MCF 10A (cell line): ENCODE measurements at regions of chr1 and their contacts with region 1.

Region 1: DNA sequence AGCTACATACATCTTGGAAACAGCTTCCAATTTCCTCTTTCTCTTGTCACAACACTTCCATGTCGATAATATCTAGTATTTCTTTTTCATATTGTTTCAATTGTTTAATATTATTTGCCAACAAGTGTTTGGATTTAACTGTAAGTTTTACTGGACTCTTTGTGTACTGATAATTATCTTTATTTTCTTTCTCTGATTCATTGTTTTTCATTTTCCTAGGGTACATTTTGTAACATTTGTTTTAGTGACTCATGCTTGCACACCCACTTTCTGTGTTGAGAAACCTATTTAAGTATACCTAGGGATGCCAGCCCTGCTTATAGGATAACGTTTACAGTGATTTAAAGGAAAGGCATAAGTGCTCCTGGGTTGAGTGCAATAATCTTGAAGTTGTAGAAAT is 1386.0 kb upstream of the ADGRL4 start:
- DNase-seq: peak; percentile 88
- H3K4me3 Mint-ChIP-seq: no peak overlapping the region
- H3K27ac Mint-ChIP-seq: peak overlapping the region; percentile 94
- H3K4me1 Mint-ChIP-seq: peaks cover 11% of the 10 kb centered on the region
- H3K27me3 Mint-ChIP-seq: no peaks in the 10 kb centered on the region
- CTCF ChIP-seq: no peak

Region 2: DNA sequence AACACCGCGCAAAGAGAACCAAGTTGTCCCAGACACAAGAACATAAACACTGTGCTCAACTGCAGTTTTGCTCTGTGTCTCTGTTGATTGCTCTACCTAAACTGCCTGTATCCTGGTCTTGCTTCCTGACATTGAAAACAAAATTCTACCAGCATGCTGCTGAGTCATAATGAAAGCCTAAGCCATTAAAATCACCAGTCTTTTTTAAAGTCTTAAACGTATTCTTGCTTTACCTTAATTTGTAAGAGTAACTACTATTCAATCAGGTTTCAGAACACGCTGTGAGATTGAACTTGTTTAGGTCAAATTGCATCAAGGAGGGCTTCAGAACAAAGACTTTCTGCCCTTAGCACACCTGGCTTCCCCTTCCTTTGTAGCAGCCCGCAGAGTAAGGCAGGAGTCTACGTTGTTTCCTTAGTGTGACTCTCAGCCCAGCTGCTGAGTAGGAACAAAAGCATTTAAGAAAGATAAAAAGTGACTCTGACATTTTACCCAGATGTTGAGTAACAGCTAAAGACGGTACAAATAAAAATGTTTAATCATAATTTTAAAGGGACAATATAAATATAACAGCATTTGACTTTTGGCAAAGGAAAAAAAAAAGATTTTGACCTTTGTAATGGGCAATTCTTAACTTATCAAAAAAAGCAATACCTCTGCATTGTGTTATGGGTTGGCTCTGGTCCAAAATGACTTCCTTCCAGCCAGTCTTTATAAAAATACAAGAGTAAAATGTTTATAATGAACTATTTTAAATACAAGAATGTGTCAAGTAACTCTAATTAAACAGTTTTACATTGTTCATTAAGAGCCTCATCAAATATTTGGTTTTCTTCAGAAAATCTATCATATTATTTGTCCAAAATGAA is 1199.0 kb before region 1 on chr1:
- CTCF ChIA-PET with region 1: no interaction called
- POLR2A ChIA-PET with region 1: no interaction called
- intact Hi-C with region 1: loop called (anchors 10 kb)
- DNase-seq: peak; percentile 73
- H3K4me3 Mint-ChIP-seq: peak overlapping the region; percentile 52
- H3K27ac Mint-ChIP-seq: peak overlapping the region; percentile 92
- H3K4me1 Mint-ChIP-seq: peaks cover 10% of the 10 kb centered on the region
- H3K27me3 Mint-ChIP-seq: no peaks in the 10 kb centered on the region
- CTCF ChIP-seq: no peak

Region 3: DNA sequence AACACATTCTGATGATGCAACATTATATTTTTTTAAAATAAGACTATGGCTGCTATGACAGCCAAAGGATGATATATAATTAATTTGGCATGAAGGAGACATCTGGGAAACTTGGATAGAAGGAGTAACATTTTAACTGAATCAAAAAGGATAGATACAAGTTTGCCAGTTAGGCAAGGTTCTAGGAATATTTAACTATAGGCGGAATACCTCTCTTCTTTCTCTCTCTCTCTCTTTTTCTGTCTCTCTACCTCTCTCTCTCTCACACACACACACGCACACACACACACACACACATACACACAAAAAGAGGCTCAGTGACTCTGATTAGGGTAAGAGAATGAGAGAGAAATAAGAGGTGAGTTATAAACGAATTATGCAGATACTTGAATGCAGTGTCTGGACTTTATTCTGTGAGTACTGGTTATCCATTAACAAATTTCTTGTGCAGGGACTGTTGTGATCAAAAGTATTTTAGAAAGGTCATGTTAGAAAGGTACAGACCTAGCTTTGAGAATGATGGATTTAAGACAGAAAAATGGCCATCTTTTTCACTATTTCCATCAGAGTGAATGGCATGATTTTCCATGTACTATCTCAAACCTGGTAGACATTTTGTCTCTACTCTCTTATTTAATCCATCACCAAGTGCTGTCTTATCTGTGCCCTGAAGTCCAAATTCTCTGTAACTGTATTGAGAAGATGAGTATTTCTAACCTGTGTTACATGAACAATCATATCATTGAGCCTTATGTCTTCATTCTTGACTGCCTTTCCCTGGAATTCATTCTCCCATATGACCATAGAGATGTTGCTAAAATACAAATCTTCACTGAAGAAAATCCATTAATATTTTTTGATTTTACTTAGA is 279.1 kb before region 1 on chr1:
- CTCF ChIA-PET with region 1: no interaction called
- POLR2A ChIA-PET with region 1: no interaction called
- intact Hi-C with region 1: no loop called
- DNase-seq: no peak
- H3K4me3 Mint-ChIP-seq: no peak overlapping the region
- H3K27ac Mint-ChIP-seq: no peak overlapping the region
- H3K4me1 Mint-ChIP-seq: no peaks in the 10 kb centered on the region
- H3K27me3 Mint-ChIP-seq: no peaks in the 10 kb centered on the region
- CTCF ChIP-seq: no peak